K562 (cell line): ENCODE measurements at regions of chr2 and their contacts with region 1.

Region 1: DNA sequence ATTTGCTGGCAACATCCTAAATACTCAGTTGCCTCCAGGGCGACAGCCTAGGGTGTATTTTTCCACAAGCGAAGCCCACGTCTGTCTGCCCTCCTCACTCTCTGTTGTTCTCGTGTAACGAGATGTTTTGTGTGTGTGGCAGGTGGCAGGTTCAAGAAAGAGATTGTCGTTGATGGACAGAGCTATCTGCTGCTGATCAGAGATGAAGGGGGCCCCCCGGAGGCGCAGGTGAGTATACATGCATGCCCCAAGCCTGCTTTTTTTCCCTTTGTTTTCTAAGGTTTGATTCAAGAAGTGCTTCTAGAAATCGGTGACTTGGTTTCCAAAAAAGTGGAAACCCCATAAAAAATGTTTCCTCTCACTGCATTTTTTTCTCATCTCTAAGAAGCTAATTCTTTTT is 247.0 kb downstream of the AGAP1 start:
- DNase-seq: peak; percentile 22 to 35 (median 28)
- ATAC-seq: peak; percentile 65; the same call in 2 of the 3 replicates
- H3K4me3 ChIP-seq: no peak overlapping the region
- H3K27ac ChIP-seq: no peak overlapping the region
- H3K4me1 ChIP-seq: peaks cover 0 to 7% of the 10 kb centered on the region in 2 experiments; a peak in 2 of 5 replicates
- H3K27me3 ChIP-seq: no peaks in the 10 kb centered on the region
- CTCF ChIP-seq: peak in 2 of 3 experiments; percentile 37 to 40; a peak in 4 of 6 replicates
- EP300 ChIP-seq: no peak
- POLR2A ChIP-seq: no peak
- RAD21 ChIP-seq: peak in 1 of 2 experiments; percentile 18; a peak in 1 of 4 replicates

Region 2: DNA sequence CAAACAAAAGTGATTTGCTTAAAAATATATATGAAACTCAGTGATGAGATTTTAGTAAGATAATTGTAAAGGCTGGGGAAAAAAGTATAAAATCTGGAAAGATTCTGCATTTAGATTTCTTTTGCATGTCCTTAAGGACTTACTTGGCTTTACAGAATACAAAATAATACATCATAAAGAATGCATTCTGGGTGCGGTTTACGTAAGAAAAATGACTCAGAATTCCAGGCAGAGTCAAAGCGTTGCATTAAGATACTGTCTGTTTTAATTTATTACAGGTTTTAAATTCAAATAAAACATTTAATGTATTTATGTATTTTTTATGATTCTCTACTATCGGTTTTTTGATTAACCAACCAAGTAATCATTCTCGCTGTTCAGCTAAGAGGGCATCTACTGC is 611.0 kb before region 1 on chr2:
- CTCF ChIA-PET with region 1: no interaction called
- POLR2A ChIA-PET with region 1: no interaction called
- in situ Hi-C with region 1: loop called (anchors 5 kb)
- intact Hi-C with region 1: no loop called
- DNase-seq: no peak
- ATAC-seq: no peak
- H3K4me3 ChIP-seq: no peak overlapping the region
- H3K27ac ChIP-seq: no peak overlapping the region
- H3K4me1 ChIP-seq: no peaks in the 10 kb centered on the region
- H3K27me3 ChIP-seq: no peaks in the 10 kb centered on the region; a peak in 1 of 5 replicates
- CTCF ChIP-seq: no peak
- EP300 ChIP-seq: no peak
- POLR2A ChIP-seq: no peak
- RAD21 ChIP-seq: no peak